HepG2 (cell line): ENCODE measurements at regions of chr10 and their contacts with region 1.

Region 1: GRCh38 chr10:91198781-91199180 is 21.7 kb upstream of the PCGF5 start:
- DNase-seq: no peak
- ATAC-seq: no peak
- H3K4me3 ChIP-seq: no peak overlapping the region
- H3K27ac ChIP-seq: no peak overlapping the region
- H3K4me1 ChIP-seq: peaks cover 31% of the 10 kb centered on the region
- H3K27me3 ChIP-seq: no peaks in the 10 kb centered on the region
- CTCF ChIP-seq: no peak
- EP300 ChIP-seq: no peak
- POLR2A ChIP-seq: no peak
- RAD21 ChIP-seq: no peak

Region 2: DNA sequence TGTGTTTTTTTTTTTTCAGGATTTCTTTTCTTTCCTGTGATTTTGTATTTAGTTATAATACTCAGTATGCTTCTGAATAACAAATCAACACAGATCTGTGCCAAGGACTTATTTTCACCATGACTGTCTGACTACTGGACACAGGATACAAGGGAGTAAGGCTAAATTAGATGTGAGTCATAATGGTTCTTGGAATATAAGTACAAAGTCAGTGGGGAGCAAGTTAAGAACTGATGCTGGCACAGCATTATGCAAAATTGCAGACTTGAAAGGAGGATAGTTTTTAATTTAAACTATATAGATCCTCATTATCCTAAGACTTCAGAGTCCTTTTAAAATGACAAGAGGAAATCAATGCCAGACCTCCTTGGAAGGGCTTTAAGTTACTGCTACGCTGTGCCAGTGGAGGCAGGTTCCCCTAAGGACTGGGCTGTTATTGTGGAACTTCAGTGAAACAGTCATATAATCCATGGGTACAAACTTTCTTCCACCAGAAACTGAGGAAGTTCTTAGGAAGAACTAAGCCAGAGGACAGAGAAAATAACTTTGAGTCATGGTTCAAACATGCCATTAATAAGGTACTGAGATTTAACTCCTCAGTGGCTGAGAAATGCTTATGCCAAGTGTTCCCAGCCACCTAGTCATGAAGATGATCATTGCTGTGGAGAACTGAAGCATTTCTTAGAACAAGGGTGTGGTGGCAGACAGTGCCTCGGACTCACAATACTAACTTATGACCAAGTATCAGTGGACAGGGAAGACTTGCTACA is 872.1 kb before region 1 on chr10:
- CTCF ChIA-PET with region 1: no interaction called
- POLR2A ChIA-PET with region 1: no interaction called
- in situ Hi-C with region 1: no loop called
- intact Hi-C with region 1: no loop called
- DNase-seq: no peak
- ATAC-seq: no peak
- H3K4me3 ChIP-seq: no peak overlapping the region
- H3K27ac ChIP-seq: no peak overlapping the region
- H3K4me1 ChIP-seq: no peaks in the 10 kb centered on the region
- H3K27me3 ChIP-seq: no peaks in the 10 kb centered on the region
- CTCF ChIP-seq: no peak
- EP300 ChIP-seq: no peak
- POLR2A ChIP-seq: no peak
- RAD21 ChIP-seq: no peak

Region 3: DNA sequence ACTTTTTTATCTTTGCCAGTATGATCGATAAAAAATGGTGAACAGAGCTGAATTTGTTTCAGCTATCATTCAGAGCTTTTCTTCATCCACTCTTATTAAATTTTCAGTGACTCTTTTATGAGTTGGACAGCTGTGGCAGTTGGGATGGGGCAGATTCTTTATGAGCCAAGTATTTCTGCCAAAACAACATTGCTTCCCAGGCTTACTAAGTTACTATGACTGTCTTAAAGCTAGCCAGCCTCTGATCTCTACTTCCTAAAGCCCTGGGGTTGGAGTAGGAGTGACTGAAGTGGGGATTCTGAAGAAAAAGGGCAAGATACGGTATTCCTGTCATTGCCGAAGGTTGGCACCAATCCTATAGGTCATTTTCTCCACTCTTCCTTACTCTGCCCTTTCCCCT is 314.4 kb before region 1 on chr10:
- CTCF ChIA-PET with region 1: no interaction called
- POLR2A ChIA-PET with region 1: no interaction called
- in situ Hi-C with region 1: no loop called
- intact Hi-C with region 1: no loop called
- DNase-seq: no peak
- ATAC-seq: no peak
- H3K4me3 ChIP-seq: no peak overlapping the region
- H3K27ac ChIP-seq: no peak overlapping the region
- H3K4me1 ChIP-seq: no peaks in the 10 kb centered on the region
- H3K27me3 ChIP-seq: no peaks in the 10 kb centered on the region
- CTCF ChIP-seq: no peak
- EP300 ChIP-seq: no peak
- POLR2A ChIP-seq: no peak
- RAD21 ChIP-seq: no peak

Region 4: DNA sequence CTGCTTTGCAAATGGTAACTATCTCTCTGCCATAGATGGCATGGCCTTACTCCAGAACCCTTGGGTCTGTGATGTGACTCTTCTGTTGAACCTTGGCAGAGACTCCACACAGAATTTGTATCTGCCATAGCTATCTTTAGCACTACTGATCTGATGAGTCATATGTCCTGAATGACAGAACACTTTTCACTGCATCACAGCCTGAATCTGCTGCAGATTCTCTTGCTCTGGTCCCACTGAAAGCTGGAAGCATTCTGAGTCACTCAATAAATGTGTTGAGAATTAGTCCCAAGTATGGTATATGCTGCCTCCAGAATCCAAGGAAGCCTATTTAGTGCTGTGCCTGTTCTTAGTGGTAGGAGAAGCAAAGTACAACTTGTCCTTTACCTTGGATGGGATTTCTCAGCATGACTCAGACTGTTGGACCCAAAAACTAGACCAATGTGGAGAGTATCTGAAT is 238.4 kb before region 1 on chr10:
- CTCF ChIA-PET with region 1: no interaction called
- POLR2A ChIA-PET with region 1: no interaction called
- in situ Hi-C with region 1: no loop called
- intact Hi-C with region 1: no loop called
- DNase-seq: no peak
- ATAC-seq: no peak; the same call in 2 of the 3 replicates
- H3K4me3 ChIP-seq: no peak overlapping the region
- H3K27ac ChIP-seq: no peak overlapping the region
- H3K4me1 ChIP-seq: 0 out of 2 replicates have a peak, but pooled peaks cover 9% of the 10 kb centered on the region
- H3K27me3 ChIP-seq: no peaks in the 10 kb centered on the region
- CTCF ChIP-seq: no peak
- EP300 ChIP-seq: no peak
- POLR2A ChIP-seq: no peak
- RAD21 ChIP-seq: no peak

Region 5: GRCh38 chr10:91220194-91220953 is 21.6 kb after region 1 on chr10 and contains the start of gene PCGF5:
- CTCF ChIA-PET with region 1: no interaction called
- POLR2A ChIA-PET with region 1: interaction called, 8 read pairs
- in situ Hi-C with region 1: no loop called
- intact Hi-C with region 1: loop called (anchors 1 kb)
- DNase-seq: no peak
- ATAC-seq: peak; percentile 94
- H3K4me3 ChIP-seq: peak within 1 kb of the TSS; percentile 90 to 96 (median 90)
- H3K27ac ChIP-seq: peak within 1 kb of the TSS; percentile 100
- H3K4me1 ChIP-seq: peaks cover 78% of the 10 kb centered on the region
- H3K27me3 ChIP-seq: no peaks in the 10 kb centered on the region
- CTCF ChIP-seq: peak; percentile 39; the same call in 1 of the 2 replicates
- EP300 ChIP-seq: no peak
- POLR2A ChIP-seq: peak; percentile 79 to 81
- RAD21 ChIP-seq: peak; percentile 76
- total RNA-seq, gene PCGF5: 61.3 and 74.8 TPM in 2 replicates